OCI-LY7 (cell line): ENCODE measurements at regions of chr17 and their contacts with region 1.

Region 1: GRCh38 chr17:66255112-66255511 is 25.9 kb upstream of the APOH start:
- DNase-seq: peak; percentile 80
- H3K4me3 ChIP-seq: no peak overlapping the region
- H3K27ac ChIP-seq: no peak overlapping the region
- H3K4me1 ChIP-seq: no peaks in the 10 kb centered on the region
- CTCF ChIP-seq: peak; percentile 94

Region 2: DNA sequence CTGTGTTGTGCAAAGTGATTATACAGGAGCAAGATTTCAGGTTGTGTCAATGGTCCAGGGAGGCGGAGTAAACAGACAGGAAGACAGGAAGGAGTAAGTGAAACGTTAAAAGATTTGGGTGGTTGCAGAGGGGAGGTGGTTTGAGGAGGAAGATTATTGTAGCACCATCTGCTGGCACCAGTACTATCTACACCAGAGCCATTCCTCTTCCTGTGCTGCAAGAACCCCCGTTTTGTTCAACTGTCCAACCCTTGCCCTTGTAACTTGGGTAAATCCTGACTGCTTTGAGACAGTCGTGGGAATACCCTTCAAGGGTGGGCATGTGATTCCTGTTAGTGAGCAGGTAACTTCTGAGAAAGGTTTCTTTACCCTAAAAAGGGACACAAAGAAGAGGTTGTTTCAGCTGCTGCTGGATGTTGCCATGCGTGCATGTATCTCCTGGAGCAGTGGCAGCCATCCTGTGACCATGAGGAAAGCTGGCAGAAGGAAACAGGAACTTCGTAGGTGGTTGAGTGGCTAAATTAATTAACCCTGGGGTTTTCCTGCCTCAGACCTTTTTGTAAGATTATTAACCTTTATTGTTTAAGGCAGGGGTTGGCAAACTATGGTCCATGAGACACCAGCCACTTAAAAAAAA is 171.4 kb after region 1 on chr17:
- CTCF ChIA-PET with region 1: no interaction called
- POLR2A ChIA-PET with region 1: no interaction called
- intact Hi-C with region 1: loop called (anchors 1 kb)
- DNase-seq: peak; percentile 41
- H3K4me3 ChIP-seq: no peak overlapping the region
- H3K27ac ChIP-seq: no peak overlapping the region
- H3K4me1 ChIP-seq: peaks cover 16% of the 10 kb centered on the region
- CTCF ChIP-seq: peak; percentile 68

Region 3: GRCh38 chr17:66625311-66625775 is 370.2 kb after region 1 on chr17:
- CTCF ChIA-PET with region 1: no interaction called
- POLR2A ChIA-PET with region 1: no interaction called
- intact Hi-C with region 1: loop called (anchors 1 kb)
- DNase-seq: peak; percentile 32
- H3K4me3 ChIP-seq: no peak overlapping the region
- H3K27ac ChIP-seq: no peak overlapping the region
- H3K4me1 ChIP-seq: no peaks in the 10 kb centered on the region
- CTCF ChIP-seq: peak; percentile 73

Region 4: GRCh38 chr17:66702106-66702872 is 447.2 kb after region 1 on chr17:
- CTCF ChIA-PET with region 1: no interaction called
- POLR2A ChIA-PET with region 1: no interaction called
- intact Hi-C with region 1: loop called (anchors 2 kb)
- DNase-seq: no peak
- H3K4me3 ChIP-seq: no peak overlapping the region
- H3K27ac ChIP-seq: no peak overlapping the region
- H3K4me1 ChIP-seq: peaks cover 35% of the 10 kb centered on the region
- CTCF ChIP-seq: no peak